Activated CD4-positive, alpha-beta memory T cell treated with anti-CD3 and anti-CD28 coated beads for 36 hours (primary cell): ENCODE measurements at regions of chr19 and their contacts with region 1.

Region 1: GRCh38 chr19:52007806-52008557 is at the start of gene ZNF615:
- DNase-seq: peak; percentile 91
- H3K4me3 Mint-ChIP-seq: peak within 1 kb of the TSS; percentile 94
- H3K27ac Mint-ChIP-seq: peak within 1 kb of the TSS; percentile 94
- H3K4me1 Mint-ChIP-seq: peaks cover 16% of the 10 kb centered on the region
- H3K27me3 Mint-ChIP-seq: no peaks in the 10 kb centered on the region
- total RNA-seq, gene ZNF615: 7.5 to 7.8 TPM

Region 2: GRCh38 chr19:51837145-51837544 is 170.8 kb before region 1 on chr19:
- CTCF ChIA-PET with region 1: no interaction called
- POLR2A ChIA-PET with region 1: no interaction called
- intact Hi-C with region 1: no loop called
- DNase-seq: no peak
- H3K4me3 Mint-ChIP-seq: no peak overlapping the region
- H3K27ac Mint-ChIP-seq: no peak overlapping the region
- H3K4me1 Mint-ChIP-seq: no peaks in the 10 kb centered on the region
- H3K27me3 Mint-ChIP-seq: no peaks in the 10 kb centered on the region

Region 3: GRCh38 chr19:51904331-51905165 is 103.4 kb before region 1 on chr19 and contains the start of gene ZNF649:
- CTCF ChIA-PET with region 1: no interaction called
- POLR2A ChIA-PET with region 1: no interaction called
- intact Hi-C with region 1: loop called (anchors 1 kb)
- DNase-seq: peak; percentile 88
- H3K4me3 Mint-ChIP-seq: peak within 1 kb of the TSS; percentile 99
- H3K27ac Mint-ChIP-seq: peak within 1 kb of the TSS; percentile 97
- H3K4me1 Mint-ChIP-seq: peaks cover 22% of the 10 kb centered on the region
- H3K27me3 Mint-ChIP-seq: peaks cover 16% of the 10 kb centered on the region
- total RNA-seq, gene ZNF649: 6.7 to 9.0 TPM

Region 4: GRCh38 chr19:51926784-51927742 is 80.9 kb before region 1 on chr19 and contains the start of gene ZNF613:
- CTCF ChIA-PET with region 1: no interaction called
- POLR2A ChIA-PET with region 1: no interaction called
- intact Hi-C with region 1: loop called (anchors 1 kb)
- DNase-seq: peak; percentile 90
- H3K4me3 Mint-ChIP-seq: peak within 1 kb of the TSS; percentile 92
- H3K27ac Mint-ChIP-seq: peak within 1 kb of the TSS; percentile 97
- H3K4me1 Mint-ChIP-seq: peaks cover 20% of the 10 kb centered on the region
- H3K27me3 Mint-ChIP-seq: no peaks in the 10 kb centered on the region
- total RNA-seq, gene ZNF613: 3.2 to 4.6 TPM

Region 5: GRCh38 chr19:51986309-51987291 is 21.4 kb before region 1 on chr19 and contains the start of gene ZNF350:
- CTCF ChIA-PET with region 1: no interaction called
- POLR2A ChIA-PET with region 1: no interaction called
- intact Hi-C with region 1: loop called (anchors 1 kb)
- DNase-seq: peak; percentile 94
- H3K4me3 Mint-ChIP-seq: peak within 1 kb of the TSS; percentile 89
- H3K27ac Mint-ChIP-seq: peak within 1 kb of the TSS; percentile 87
- H3K4me1 Mint-ChIP-seq: peaks cover 12% of the 10 kb centered on the region
- H3K27me3 Mint-ChIP-seq: no peaks in the 10 kb centered on the region
- total RNA-seq, gene ZNF350: 6.9 to 8.1 TPM

Region 6: GRCh38 chr19:52020506-52020905 is 12.5 kb after region 1 on chr19:
- CTCF ChIA-PET with region 1: no interaction called
- POLR2A ChIA-PET with region 1: no interaction called
- intact Hi-C with region 1: loop called (anchors 1 kb)
- DNase-seq: no peak
- H3K4me3 Mint-ChIP-seq: no peak overlapping the region
- H3K27ac Mint-ChIP-seq: no peak overlapping the region
- H3K4me1 Mint-ChIP-seq: no peaks in the 10 kb centered on the region
- H3K27me3 Mint-ChIP-seq: no peaks in the 10 kb centered on the region

Region 7: GRCh38 chr19:52028027-52028779 is 20.2 kb after region 1 on chr19 and contains the start of gene ZNF614:
- CTCF ChIA-PET with region 1: no interaction called
- POLR2A ChIA-PET with region 1: interaction called, 3 read pairs
- intact Hi-C with region 1: loop called (anchors 1 kb)
- DNase-seq: peak; percentile 92
- H3K4me3 Mint-ChIP-seq: peak within 1 kb of the TSS; percentile 83
- H3K27ac Mint-ChIP-seq: peak within 1 kb of the TSS; percentile 87
- H3K4me1 Mint-ChIP-seq: peaks cover 10% of the 10 kb centered on the region
- H3K27me3 Mint-ChIP-seq: no peaks in the 10 kb centered on the region
- total RNA-seq, gene ZNF614: 7.2 TPM